Activated B cell treated with CpG ODN at 0.5 μM for 24 hours (primary cell): ENCODE measurements at regions of chr19 and their contacts with region 1.

Region 1: DNA sequence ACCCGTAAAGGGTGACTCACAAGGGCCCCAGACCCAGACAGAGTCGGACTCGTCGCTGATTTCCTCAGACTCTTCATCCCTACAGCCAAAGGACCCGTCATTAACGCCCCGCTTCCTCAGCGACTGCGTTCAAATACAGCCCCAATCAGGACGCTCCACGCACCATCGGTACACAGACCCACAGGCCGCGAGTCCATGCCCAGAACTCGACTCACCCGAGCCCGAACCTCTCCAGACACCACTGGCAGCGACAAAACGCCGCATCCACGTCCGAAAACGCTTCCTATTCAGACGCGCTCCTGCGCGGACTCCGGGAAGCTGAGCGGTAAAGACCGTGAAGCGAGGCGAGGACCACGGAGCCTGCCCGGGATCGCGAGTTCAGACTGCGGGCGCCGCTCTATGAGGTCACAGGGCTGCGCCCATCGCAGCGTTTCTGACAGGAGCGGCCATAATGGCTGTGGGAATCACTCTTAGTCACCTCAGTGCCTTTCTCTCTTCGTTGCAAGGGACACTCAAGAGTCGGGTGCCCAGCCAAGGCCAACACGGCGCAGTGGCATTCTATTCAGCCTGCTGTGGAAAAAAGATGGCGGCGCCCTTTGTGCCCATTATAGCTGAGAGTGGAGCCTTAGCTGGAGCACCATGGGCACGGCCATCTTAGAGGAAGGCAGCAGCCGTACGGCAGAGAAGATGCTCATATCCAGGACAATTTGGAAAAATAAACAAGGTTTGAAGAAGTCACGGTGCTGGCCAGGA is at the start of gene ZNF614:
- DNase-seq: peak; percentile 86
- ATAC-seq: peak; percentile 89
- H3K4me3 Mint-ChIP-seq: peak within 1 kb of the TSS; percentile 98
- H3K27ac Mint-ChIP-seq: peak within 1 kb of the TSS; percentile 93
- H3K4me1 Mint-ChIP-seq: peaks cover 29% of the 10 kb centered on the region
- H3K27me3 Mint-ChIP-seq: no peaks in the 10 kb centered on the region
- CTCF ChIP-seq: no peak
- total RNA-seq, gene ZNF614: 14.0 and 14.3 TPM in 2 replicates

Region 2: GRCh38 chr19:51607920-51608562 is 420.2 kb before region 1 on chr19:
- CTCF ChIA-PET with region 1: no interaction called
- POLR2A ChIA-PET with region 1: no interaction called
- intact Hi-C with region 1: no loop called
- DNase-seq: peak; percentile 54
- ATAC-seq: no peak
- H3K4me3 Mint-ChIP-seq: no peak overlapping the region
- H3K27ac Mint-ChIP-seq: peak overlapping the region; percentile 88
- H3K4me1 Mint-ChIP-seq: peaks cover 63% of the 10 kb centered on the region
- H3K27me3 Mint-ChIP-seq: no peaks in the 10 kb centered on the region
- CTCF ChIP-seq: no peak

Region 3: DNA sequence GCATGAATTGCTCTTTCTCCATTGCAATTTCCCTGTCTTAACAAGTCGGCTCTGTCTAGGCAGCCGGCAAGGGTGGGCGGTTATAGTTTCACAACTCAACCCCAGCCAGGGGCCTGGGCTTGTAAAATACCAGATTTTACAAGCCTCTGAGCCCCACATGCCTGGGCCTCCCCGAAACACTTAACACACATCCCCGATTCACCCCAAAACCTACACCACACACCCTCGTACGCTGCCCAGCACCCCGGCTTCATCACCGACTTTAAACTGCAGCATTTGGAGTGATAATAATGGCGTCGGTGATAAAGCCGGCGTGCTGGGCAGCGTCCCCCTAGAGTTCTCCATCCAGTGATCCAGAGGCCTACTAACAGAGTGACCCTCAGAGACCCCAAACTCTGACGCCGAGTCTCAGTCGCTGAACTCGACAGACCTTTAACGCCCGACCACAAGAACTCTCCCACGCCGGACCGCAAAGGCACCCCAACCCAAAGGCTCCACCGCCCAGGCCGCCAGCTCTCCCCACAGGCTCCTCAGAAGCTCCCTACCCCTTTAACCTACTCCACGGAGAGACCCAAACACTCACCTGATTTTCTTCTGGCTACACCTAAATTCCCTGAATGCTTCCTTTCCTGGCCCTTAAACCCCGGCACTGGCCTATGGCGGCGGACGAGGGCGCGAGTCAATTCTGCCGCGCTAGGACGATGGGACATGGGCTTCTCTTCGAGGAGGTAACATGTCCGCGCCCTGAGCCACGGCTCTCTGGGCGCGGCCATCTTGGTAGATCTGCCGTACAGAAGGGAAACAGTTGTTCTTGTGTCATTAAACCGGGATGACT is 123.7 kb before region 1 on chr19 and contains the start of gene ZNF649:
- CTCF ChIA-PET with region 1: no interaction called
- POLR2A ChIA-PET with region 1: no interaction called
- intact Hi-C with region 1: loop called (anchors 1 kb)
- DNase-seq: peak; percentile 68
- ATAC-seq: peak; percentile 95
- H3K4me3 Mint-ChIP-seq: peak within 1 kb of the TSS; percentile 99
- H3K27ac Mint-ChIP-seq: peak within 1 kb of the TSS; percentile 98
- H3K4me1 Mint-ChIP-seq: peaks cover 24% of the 10 kb centered on the region
- H3K27me3 Mint-ChIP-seq: peaks cover 15% of the 10 kb centered on the region
- CTCF ChIP-seq: no peak
- total RNA-seq, gene ZNF649: 21.9 and 27.4 TPM in 2 replicates

Region 4: DNA sequence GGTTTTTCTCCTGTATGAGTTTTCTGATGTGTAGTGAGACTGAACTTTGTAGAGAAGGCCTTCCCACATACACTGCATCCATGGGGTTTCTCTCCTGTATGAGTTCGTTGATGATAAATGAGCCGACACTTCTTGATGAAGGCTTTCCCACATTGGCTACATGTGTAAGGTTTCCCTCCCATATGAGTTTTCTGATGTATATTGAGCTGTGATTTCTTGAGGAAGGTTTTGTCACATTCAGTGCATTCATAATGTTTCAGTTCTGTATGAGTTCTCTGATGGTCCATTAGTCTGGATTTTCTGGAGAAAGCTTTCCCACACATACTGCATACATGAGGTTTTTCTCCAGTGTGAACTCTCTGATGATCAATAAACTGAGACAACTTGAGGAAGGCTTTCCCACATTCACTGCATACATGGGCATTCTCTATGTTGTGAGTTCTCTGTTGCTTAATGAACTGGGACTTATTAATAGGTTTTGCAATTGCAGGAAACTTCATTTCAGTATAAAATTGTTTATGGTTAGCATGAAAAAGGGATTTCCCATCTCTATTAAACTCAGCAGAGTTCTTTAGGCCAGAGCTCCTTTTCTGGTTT is 34.1 kb before region 1 on chr19:
- CTCF ChIA-PET with region 1: no interaction called
- POLR2A ChIA-PET with region 1: no interaction called
- intact Hi-C with region 1: no loop called
- DNase-seq: no peak
- ATAC-seq: no peak
- H3K4me3 Mint-ChIP-seq: no peak overlapping the region
- H3K27ac Mint-ChIP-seq: no peak overlapping the region
- H3K4me1 Mint-ChIP-seq: no peaks in the 10 kb centered on the region
- H3K27me3 Mint-ChIP-seq: no peaks in the 10 kb centered on the region
- CTCF ChIP-seq: no peak

Region 5: DNA sequence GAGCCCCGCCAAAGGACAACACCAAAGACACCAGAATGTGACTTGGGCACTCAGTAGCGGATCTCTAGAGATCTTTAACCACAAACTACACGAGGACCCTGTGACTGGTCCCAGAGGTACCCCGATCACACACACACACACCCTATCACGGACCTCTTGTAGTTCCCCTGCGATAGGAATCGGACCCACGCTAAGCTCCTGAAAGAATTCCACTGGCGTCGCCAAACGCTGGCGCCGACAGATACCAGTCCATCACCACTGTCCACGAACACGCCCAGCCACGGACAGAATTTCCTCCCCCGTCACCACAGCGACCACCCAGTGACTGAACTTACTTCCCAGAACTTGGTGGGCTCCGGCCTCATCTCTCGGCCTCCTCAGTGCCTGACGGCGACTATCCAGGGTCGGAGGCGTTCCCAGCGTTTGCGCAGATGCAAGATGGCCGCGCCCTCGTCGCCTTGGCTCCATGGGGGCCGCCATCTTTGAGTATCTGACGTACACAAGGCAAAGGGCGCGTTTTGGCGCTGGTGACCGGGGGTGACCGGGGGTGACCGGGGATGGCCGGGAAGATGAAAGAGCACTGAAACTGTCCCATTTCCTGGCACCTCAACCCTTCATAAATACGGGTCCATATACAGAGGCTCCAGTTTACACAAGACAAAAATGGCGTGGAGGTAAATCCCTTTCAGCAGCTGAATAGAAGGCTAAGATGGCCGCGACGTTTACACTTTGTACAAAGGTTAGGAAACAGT is 20.2 kb before region 1 on chr19 and contains the start of gene ZNF615:
- CTCF ChIA-PET with region 1: no interaction called
- POLR2A ChIA-PET with region 1: interaction called, 10 read pairs
- intact Hi-C with region 1: loop called (anchors 1 kb)
- DNase-seq: peak; percentile 85
- ATAC-seq: peak; percentile 94
- H3K4me3 Mint-ChIP-seq: peak within 1 kb of the TSS; percentile 93
- H3K27ac Mint-ChIP-seq: peak within 1 kb of the TSS; percentile 99
- H3K4me1 Mint-ChIP-seq: peaks cover 18% of the 10 kb centered on the region
- H3K27me3 Mint-ChIP-seq: no peaks in the 10 kb centered on the region
- CTCF ChIP-seq: no peak
- total RNA-seq, gene ZNF615: 9.1 and 13.5 TPM in 2 replicates

Region 6: GRCh38 chr19:52269338-52270261 is 241.4 kb after region 1 on chr19 and contains the start of gene ZNF766:
- CTCF ChIA-PET with region 1: no interaction called
- POLR2A ChIA-PET with region 1: interaction called, 16 read pairs
- intact Hi-C with region 1: no loop called
- DNase-seq: peak; percentile 98
- ATAC-seq: peak; percentile 97
- H3K4me3 Mint-ChIP-seq: peak within 1 kb of the TSS; percentile 98
- H3K27ac Mint-ChIP-seq: peak within 1 kb of the TSS; percentile 94
- H3K4me1 Mint-ChIP-seq: peaks cover 45% of the 10 kb centered on the region
- H3K27me3 Mint-ChIP-seq: no peaks in the 10 kb centered on the region
- CTCF ChIP-seq: no peak
- total RNA-seq, gene ZNF766: 33.0 and 35.0 TPM in 2 replicates